AG04450 (cell line): ENCODE measurements at regions of chr3 and their contacts with region 1.

Region 1: GRCh38 chr3:8576841-8577571 is 67.6 kb downstream of the SSUH2 start:
- DNase-seq: peak; percentile 91
- H3K4me3 ChIP-seq: no peak overlapping the region
- H3K27ac ChIP-seq: peak overlapping the region; percentile 94
- H3K27me3 ChIP-seq: no peaks in the 10 kb centered on the region
- CTCF ChIP-seq: no peak

Region 2: DNA sequence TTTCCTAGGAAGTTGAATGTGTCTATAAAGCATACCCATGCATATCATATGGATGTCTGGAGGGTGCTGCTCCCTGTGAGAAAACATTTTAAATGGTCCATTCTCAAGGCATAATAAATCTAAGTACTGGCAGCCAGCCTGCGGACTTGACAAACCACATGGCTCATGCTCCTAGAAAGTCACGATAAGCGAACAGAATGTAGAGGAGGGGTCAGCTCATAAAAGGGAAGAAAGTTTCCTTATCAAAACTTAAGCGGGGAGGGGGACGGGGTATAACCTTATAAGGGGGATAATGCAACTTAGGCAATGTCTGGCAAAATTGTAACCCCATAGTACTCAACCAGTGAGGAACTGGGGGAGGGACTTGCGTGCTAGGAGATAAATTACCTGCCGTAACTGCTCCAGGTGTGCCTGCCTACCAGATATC is 235.2 kb before region 1 on chr3:
- CTCF ChIA-PET with region 1: no interaction called
- POLR2A ChIA-PET with region 1: no interaction called
- DNase-seq: no peak
- H3K4me3 ChIP-seq: no peak overlapping the region
- H3K27ac ChIP-seq: no peak overlapping the region
- H3K27me3 ChIP-seq: peaks cover 3% of the 10 kb centered on the region
- CTCF ChIP-seq: no peak

Region 3: GRCh38 chr3:8441969-8442559 is 134.9 kb before region 1 on chr3:
- CTCF ChIA-PET with region 1: interaction called, 29 read pairs
- POLR2A ChIA-PET with region 1: interaction called, 13 read pairs
- DNase-seq: peak; percentile 48
- H3K4me3 ChIP-seq: no peak overlapping the region
- H3K27ac ChIP-seq: no peak overlapping the region
- H3K27me3 ChIP-seq: no peaks in the 10 kb centered on the region
- CTCF ChIP-seq: peak; percentile 88

Region 4: GRCh38 chr3:8501371-8502131 is 75.5 kb before region 1 on chr3 and contains the start of gene LMCD1:
- CTCF ChIA-PET with region 1: no interaction called
- POLR2A ChIA-PET with region 1: interaction called, 23 read pairs
- DNase-seq: peak; percentile 89
- H3K4me3 ChIP-seq: peak within 1 kb of the TSS; percentile 64
- H3K27ac ChIP-seq: peak within 1 kb of the TSS; percentile 94
- H3K27me3 ChIP-seq: no peaks in the 10 kb centered on the region
- CTCF ChIP-seq: peak; percentile 38
- polyA plus RNA-seq, gene LMCD1: 39.1 and 49.5 TPM in 2 replicates

Region 5: DNA sequence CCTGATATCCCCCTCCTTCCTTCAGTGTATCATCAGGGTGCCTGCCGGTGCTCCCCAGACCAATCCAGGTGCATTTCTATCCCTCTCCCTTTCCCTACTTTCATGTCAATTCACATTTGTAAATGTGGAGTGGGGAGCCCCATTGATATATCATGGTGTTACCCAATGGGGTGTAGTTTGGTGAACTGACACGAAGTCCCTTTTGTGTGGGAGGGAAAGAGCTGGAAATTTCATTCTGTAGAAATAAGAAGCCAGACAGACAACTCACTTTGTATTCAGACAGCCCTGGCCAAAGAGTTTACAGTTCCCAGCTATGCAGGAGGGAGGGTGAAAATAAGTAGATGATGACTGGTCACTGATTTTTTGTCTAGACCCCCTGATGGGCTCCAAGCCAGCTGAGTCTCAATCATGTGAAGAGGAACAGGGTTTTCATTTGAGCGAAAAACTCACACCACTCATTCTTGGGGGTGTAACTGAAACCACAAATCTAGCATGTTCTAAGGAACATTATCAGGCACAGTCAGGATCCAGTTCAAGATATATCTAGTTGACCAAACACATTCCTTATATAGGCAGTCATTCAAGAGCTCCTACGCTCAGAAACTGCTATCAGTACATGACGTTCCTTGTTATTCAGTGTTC is 16.5 kb before region 1 on chr3:
- CTCF ChIA-PET with region 1: interaction called, 6 read pairs
- POLR2A ChIA-PET with region 1: interaction called, 20 read pairs
- DNase-seq: peak; percentile 65
- H3K4me3 ChIP-seq: no peak overlapping the region
- H3K27ac ChIP-seq: peak overlapping the region; percentile 79
- H3K27me3 ChIP-seq: no peaks in the 10 kb centered on the region
- CTCF ChIP-seq: no peak

Region 6: GRCh38 chr3:8622873-8623691 is 46.1 kb after region 1 on chr3:
- CTCF ChIA-PET with region 1: interaction called, 7 read pairs
- POLR2A ChIA-PET with region 1: interaction called, 16 read pairs
- DNase-seq: peak; percentile 36
- H3K4me3 ChIP-seq: no peak overlapping the region
- H3K27ac ChIP-seq: no peak overlapping the region
- H3K27me3 ChIP-seq: no peaks in the 10 kb centered on the region
- CTCF ChIP-seq: peak; percentile 94